BJ (cell line): ENCODE measurements at regions of chr6 and their contacts with region 1.

Region 1: GRCh38 chr6:117449549-117450439 is 24.1 kb upstream of the ROS1 start:
- DNase-seq: no peak
- H3K4me3 ChIP-seq: no peak overlapping the region
- H3K27me3 ChIP-seq: no peaks in the 10 kb centered on the region
- CTCF ChIP-seq: peak; percentile 61

Region 2: GRCh38 chr6:117118490-117118889 is 331.3 kb before region 1 on chr6:
- CTCF ChIA-PET with region 1: no interaction called
- POLR2A ChIA-PET with region 1: no interaction called
- DNase-seq: no peak
- H3K4me3 ChIP-seq: no peak overlapping the region
- H3K27me3 ChIP-seq: no peaks in the 10 kb centered on the region
- CTCF ChIP-seq: no peak

Region 3: DNA sequence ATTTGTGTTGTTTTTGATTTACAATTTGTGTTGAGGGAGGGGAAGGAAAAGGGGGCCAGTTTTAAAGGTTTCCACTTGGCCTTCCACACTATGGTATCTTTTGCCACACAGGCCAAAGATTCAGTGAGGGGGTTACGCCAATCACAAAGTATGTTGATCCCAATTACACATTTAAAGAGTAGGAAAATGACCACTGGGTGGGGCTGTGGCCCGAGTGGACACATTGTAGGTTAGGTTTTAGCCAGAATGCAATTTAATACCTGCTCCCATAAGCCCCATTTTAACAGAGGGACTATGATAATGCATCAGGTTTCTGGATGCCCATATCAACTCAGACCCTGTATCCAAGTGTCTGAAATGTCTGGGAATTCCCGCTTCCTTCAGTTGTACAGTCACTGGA is 168.9 kb before region 1 on chr6:
- CTCF ChIA-PET with region 1: no interaction called
- POLR2A ChIA-PET with region 1: no interaction called
- DNase-seq: no peak
- H3K4me3 ChIP-seq: no peak overlapping the region
- H3K27me3 ChIP-seq: no peaks in the 10 kb centered on the region; the same call in 1 of the 2 replicates
- CTCF ChIP-seq: peak; percentile 23; the same call in 1 of the 2 replicates

Region 4: DNA sequence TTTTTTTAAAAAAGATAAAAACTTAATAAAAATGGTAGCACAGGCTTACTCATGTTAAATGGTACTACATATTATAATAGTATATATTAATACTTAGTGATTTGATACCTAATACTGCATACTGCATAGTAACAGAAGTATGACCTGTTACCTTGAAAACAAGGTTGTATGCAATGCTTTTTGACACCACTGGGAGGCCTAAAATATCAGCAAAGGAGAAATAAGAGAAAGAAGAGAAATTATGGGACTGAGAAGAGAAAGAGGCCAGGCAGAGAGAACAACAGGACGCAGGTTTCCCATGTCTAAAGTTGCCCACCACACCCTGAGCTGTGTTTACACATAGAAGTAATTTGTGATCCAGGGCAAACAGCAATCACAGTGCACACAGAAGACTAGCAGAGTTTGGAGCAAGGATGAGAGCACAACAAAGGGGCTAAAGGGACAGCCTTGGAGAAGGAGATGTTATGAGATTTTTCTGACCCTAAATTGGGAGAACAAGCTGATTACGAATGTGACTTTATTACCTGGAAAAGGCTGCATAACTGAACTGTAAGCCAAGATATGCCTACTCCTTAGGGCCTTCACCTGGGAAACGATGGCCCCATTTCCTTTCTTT is 97.2 kb before region 1 on chr6:
- CTCF ChIA-PET with region 1: interaction called, 26 read pairs
- POLR2A ChIA-PET with region 1: interaction called, 4 read pairs
- DNase-seq: no peak
- H3K4me3 ChIP-seq: no peak overlapping the region
- H3K27me3 ChIP-seq: no peaks in the 10 kb centered on the region
- CTCF ChIP-seq: peak; percentile 66

Region 5: GRCh38 chr6:117482240-117483003 is 32.6 kb after region 1 on chr6 and contains the start of gene DCBLD1:
- CTCF ChIA-PET with region 1: interaction called, 12 read pairs
- POLR2A ChIA-PET with region 1: interaction called, 5 read pairs
- DNase-seq: no peak
- H3K4me3 ChIP-seq: peak within 1 kb of the TSS; percentile 92
- H3K27me3 ChIP-seq: no peaks in the 10 kb centered on the region
- CTCF ChIP-seq: no peak
- polyA plus RNA-seq, gene DCBLD1: 30.1 and 42.1 TPM in 2 replicates

Region 6: DNA sequence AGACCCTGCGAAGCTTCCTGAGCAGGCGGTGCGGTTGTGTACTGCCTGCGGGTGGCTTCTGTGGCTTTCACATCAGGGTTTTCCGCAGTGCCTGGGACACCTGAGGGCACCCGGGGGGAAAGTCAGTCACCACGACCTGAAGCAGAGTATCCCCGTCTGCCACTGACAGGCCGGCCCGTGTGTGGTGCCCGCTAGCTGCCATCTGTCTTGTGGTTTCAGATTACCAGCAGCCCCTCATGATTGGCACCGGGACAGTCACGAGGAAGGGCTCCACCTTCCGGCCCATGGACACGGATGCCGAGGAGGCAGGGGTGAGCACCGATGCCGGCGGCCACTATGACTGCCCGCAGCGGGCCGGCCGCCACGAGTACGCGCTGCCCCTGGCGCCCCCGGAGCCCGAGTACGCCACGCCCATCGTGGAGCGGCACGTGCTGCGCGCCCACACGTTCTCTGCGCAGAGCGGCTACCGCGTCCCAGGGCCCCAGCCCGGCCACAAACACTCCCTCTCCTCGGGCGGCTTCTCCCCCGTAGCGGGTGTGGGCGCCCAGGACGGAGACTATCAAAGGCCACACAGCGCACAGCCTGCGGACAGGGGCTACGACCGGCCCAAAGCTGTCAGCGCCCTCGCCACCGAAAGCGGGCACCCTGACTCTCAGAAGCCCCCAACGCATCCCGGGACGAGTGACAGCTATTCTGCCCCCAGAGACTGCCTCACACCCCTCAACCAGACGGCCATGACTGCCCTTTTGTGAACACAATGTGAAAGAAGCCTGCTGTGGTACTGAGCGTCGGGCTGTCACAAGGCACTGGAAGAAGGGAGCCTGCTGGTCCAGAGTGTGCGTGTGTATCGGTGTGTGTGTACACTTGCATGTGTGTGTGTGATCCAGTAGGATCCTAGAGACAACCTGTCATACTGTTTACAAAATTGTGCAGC is 98.2 kb after region 1 on chr6:
- CTCF ChIA-PET with region 1: interaction called, 13 read pairs
- POLR2A ChIA-PET with region 1: no interaction called
- DNase-seq: no peak
- H3K4me3 ChIP-seq: peak overlapping the region; percentile 27
- H3K27me3 ChIP-seq: no peaks in the 10 kb centered on the region
- CTCF ChIP-seq: peak; percentile 31

Region 7: DNA sequence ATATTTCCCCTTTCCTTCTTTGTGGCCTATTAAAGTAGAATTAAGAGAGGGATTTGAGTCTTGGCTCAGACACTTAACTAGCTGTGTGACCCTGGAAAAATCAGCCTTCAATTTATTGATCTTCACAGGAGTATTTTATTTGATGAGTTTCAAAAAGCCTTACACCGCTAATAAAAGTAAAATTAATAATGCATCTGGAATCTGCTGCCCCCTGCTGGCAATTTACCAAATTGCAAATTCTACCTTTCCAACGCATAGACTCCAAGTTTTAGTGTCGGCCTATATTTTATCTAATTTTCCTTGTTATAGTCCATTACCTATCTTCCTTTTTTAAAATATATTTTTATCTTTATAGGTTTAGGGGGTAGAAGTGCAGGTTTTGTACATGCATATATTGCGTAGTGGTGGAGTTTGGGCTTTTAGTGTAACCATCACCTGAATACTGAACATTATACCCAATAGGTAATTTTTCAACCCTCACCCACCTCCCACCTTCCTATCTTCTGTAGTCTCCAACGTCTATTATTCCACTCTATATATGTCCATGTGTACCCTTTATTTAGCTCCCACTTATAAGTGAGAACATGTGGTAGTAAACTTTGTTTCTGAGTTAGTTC is 106.2 kb after region 1 on chr6:
- CTCF ChIA-PET with region 1: interaction called, 29 read pairs
- POLR2A ChIA-PET with region 1: interaction called, 15 read pairs
- DNase-seq: no peak
- H3K4me3 ChIP-seq: no peak overlapping the region
- H3K27me3 ChIP-seq: no peaks in the 10 kb centered on the region
- CTCF ChIP-seq: peak; percentile 73

Region 8: GRCh38 chr6:117602151-117602898 is 152.5 kb after region 1 on chr6 and contains the start of gene GOPC:
- CTCF ChIA-PET with region 1: interaction called, 110 read pairs
- POLR2A ChIA-PET with region 1: interaction called, 4 read pairs
- DNase-seq: peak; percentile 93
- H3K4me3 ChIP-seq: peak within 1 kb of the TSS; percentile 87
- H3K27me3 ChIP-seq: no peaks in the 10 kb centered on the region
- CTCF ChIP-seq: peak; percentile 31; the same call in 1 of the 2 replicates
- polyA plus RNA-seq, gene GOPC: 26.9 and 57.1 TPM in 2 replicates

Region 9: DNA sequence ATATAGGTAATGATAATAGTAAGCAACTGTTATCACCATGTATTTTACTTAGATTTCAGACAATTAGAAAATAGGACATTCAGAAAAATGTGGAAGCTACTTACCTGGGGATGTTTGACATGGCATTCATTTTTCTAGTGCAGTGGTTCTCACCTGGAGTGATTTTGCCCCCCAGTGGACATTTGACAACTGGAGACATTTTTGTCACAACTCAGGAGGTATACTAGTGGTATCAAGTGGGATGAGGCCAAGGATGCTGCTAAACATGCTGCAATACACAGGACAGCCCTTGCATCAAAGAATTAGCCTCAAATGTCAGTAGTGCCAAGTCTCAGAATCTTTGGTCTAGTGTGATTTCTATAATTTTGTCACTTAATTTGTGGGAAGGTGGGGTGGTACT is 261.6 kb after region 1 on chr6:
- CTCF ChIA-PET with region 1: no interaction called
- POLR2A ChIA-PET with region 1: no interaction called
- DNase-seq: no peak
- H3K4me3 ChIP-seq: no peak overlapping the region
- H3K27me3 ChIP-seq: no peaks in the 10 kb centered on the region
- CTCF ChIP-seq: no peak